CD4-positive, alpha-beta T cell (primary cell): ENCODE measurements at regions of chr2 and their contacts with region 1.

Region 1: DNA sequence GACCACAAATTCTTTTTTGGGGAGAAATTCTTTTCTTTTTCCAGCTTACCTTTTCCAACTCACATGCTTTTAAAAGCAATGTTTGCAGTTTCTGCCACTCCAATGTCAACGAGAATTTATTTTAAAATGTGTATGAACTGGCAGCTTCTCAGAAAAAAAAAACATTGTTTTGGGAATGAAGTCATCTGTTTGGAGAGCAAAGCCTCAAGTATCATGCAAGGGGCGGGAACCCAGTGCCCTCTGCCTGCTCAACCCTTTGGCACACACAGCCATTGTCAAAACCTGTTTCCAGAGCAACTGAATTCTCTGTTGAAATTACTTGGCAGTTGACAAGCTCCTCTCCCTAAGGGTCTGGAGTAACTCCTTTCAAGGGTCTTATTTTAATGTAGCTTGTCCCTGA is 128.5 kb downstream of the QPCT start:
- DNase-seq: no peak
- ATAC-seq: no peak
- H3K4me3 ChIP-seq: no peak overlapping the region
- H3K4me3 Mint-ChIP-seq: no peak overlapping the region
- H3K27ac ChIP-seq: no peak overlapping the region
- H3K27ac Mint-ChIP-seq: no peak overlapping the region
- H3K4me1 ChIP-seq: no peaks in the 10 kb centered on the region
- H3K4me1 Mint-ChIP-seq: no peaks in the 10 kb centered on the region
- H3K27me3 ChIP-seq: no peaks in the 10 kb centered on the region
- H3K27me3 Mint-ChIP-seq: no peaks in the 10 kb centered on the region
- CTCF ChIP-seq: no peak

Region 2: GRCh38 chr2:37436323-37436722 is 36.6 kb before region 1 on chr2:
- CTCF ChIA-PET with region 1: no interaction called
- POLR2A ChIA-PET with region 1: no interaction called
- intact Hi-C with region 1: loop called in 1 of 2 experiments (anchors 5 kb)
- DNase-seq: no peak
- ATAC-seq: no peak
- H3K4me3 ChIP-seq: no peak overlapping the region
- H3K4me3 Mint-ChIP-seq: no peak overlapping the region
- H3K27ac ChIP-seq: no peak overlapping the region
- H3K27ac Mint-ChIP-seq: no peak overlapping the region
- H3K4me1 ChIP-seq: no peaks in the 10 kb centered on the region
- H3K4me1 Mint-ChIP-seq: no peaks in the 10 kb centered on the region
- H3K27me3 ChIP-seq: no peaks in the 10 kb centered on the region
- H3K27me3 Mint-ChIP-seq: peaks cover 4% of the 10 kb centered on the region
- CTCF ChIP-seq: no peak

Region 3: GRCh38 chr2:38013158-38013752 is 540.3 kb after region 1 on chr2:
- CTCF ChIA-PET with region 1: no interaction called
- POLR2A ChIA-PET with region 1: no interaction called
- intact Hi-C with region 1: no loop called
- DNase-seq: no peak
- ATAC-seq: no peak
- H3K4me3 ChIP-seq: no peak overlapping the region
- H3K4me3 Mint-ChIP-seq: no peak overlapping the region
- H3K27ac ChIP-seq: no peak overlapping the region
- H3K27ac Mint-ChIP-seq: no peak overlapping the region
- H3K4me1 ChIP-seq: no peaks in the 10 kb centered on the region
- H3K4me1 Mint-ChIP-seq: no peaks in the 10 kb centered on the region
- H3K27me3 ChIP-seq: no peaks in the 10 kb centered on the region
- H3K27me3 Mint-ChIP-seq: no peaks in the 10 kb centered on the region
- CTCF ChIP-seq: no peak